ENCODE measurements at regions of chr11 and their contacts with region 1.

Region 1: DNA sequence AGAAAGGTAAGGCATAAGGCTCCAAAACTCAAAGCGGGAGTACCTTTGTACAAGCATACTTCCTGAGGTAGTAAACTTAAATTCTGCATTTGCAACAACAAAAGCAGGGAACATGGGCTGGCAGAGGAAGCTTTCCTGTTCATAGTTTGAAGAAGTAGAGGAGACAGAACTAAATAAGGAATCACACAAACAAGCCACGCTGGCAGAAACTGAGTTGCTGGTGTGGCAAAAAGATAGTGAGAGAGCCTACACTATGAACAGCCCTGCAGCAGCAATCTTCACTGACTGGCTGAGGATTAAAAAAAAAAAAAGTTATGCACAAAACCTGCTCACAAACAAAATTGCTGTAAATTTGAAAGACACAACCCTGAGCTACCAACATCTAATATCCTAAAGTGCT is 46.5 kb downstream of the FCHSD2 start:
- DNase-seq: no peak
- ATAC-seq: no peak
- H3K4me3 ChIP-seq: no peak overlapping the region
- H3K27ac ChIP-seq: no peak overlapping the region
- H3K4me1 ChIP-seq: no peaks in the 10 kb centered on the region
- H3K27me3 ChIP-seq: no peaks in the 10 kb centered on the region
- CTCF ChIP-seq: no peak

Region 2: GRCh38 chr11:73058989-73059674 is 36.5 kb before region 1 on chr11:
- CTCF ChIA-PET with region 1: no interaction called
- POLR2A ChIA-PET with region 1: interaction called, 14 read pairs
- intact Hi-C with region 1: no loop called
- DNase-seq: no peak
- ATAC-seq: no peak
- H3K4me3 ChIP-seq: no peak overlapping the region
- H3K27ac ChIP-seq: no peak overlapping the region
- H3K4me1 ChIP-seq: no peaks in the 10 kb centered on the region
- H3K27me3 ChIP-seq: no peaks in the 10 kb centered on the region
- CTCF ChIP-seq: no peak

Region 3: DNA sequence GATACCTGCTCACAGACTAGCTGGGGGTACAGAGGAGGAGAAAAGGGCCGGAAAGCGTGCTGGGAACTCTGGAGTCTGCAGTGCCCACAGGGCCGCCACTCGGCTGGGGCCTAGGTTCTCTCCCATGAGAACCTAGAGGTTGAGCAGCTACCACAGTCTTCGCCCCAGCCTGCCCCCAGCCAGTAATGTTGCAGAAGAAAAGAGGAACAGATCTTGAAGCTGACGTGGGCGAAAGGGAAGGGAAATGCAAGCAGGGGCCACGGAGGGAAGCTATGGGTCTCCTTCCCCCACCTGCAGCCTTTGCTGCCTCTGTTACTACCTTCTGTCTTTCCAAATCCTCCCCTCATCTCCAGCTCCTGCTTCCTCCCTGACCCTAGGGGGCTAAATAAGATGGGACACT is 93.7 kb after region 1 on chr11:
- CTCF ChIA-PET with region 1: no interaction called
- POLR2A ChIA-PET with region 1: no interaction called
- intact Hi-C with region 1: no loop called
- DNase-seq: no peak
- ATAC-seq: no peak
- H3K4me3 ChIP-seq: no peak overlapping the region
- H3K27ac ChIP-seq: no peak overlapping the region
- H3K4me1 ChIP-seq: peaks cover 75% of the 10 kb centered on the region
- H3K27me3 ChIP-seq: no peaks in the 10 kb centered on the region
- CTCF ChIP-seq: no peak